Cardiac septum (tissue), 1 donor: ENCODE measurements at regions of chr18 and their contacts with region 1.

Region 1: GRCh38 chr18:50009773-50010335 is 185.1 kb downstream of the MYO5B start:
- DNase-seq: no peak

Region 2: DNA sequence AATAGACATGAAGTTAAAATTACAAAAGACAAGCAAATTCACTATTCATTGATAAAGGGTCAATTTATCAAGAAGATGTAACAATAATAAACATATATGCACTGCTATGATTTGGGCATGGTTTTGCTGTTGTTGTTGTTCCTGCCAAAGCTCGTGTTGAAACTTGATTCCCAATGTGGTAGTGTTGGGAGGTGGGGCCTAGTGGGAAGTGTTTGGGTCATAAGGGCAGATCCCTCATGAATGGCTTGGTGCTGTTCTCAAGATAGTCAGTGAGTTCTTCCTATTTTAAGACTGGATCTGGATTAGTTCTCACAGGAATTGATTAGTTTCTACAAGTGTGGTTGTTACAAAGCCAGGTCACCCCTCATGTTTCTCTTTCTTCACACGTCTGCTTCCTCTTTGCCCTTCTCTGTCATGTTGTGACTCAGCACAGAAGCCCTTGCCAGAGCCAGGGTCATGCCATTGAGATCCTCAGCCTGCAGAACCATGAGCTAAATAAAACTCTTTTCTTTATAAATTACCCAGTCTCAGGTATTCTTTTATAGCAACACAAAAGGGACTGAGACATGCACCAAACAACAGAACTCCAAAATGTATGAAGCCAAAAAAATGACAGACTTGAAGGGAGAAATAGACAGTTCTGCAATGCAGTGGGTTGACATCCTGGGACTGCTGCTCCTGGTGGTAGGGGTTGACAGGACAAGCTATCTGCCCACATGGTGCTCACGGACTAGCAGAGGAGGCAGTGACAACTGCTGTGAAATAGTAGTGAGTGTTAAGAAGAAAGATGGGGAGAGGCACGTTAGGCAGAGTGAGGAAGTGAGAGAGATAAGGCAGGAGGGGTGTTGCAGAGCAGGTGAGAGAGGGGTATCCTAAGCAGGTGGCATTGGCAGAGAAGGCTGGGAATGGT is 346.4 kb after region 1 on chr18:
- intact Hi-C with region 1: loop called (anchors 10 kb)
- DNase-seq: no peak